H1 (cell line): ENCODE measurements at regions of chr2 and their contacts with region 1.

Region 1: GRCh38 chr2:138373993-138374408 is 127.6 kb upstream of the SPOPL start:
- DNase-seq: no peak
- H3K4me3 ChIP-seq: no peak overlapping the region
- H3K27ac ChIP-seq: no peak overlapping the region
- H3K4me1 ChIP-seq: no peaks in the 10 kb centered on the region
- H3K27me3 ChIP-seq: no peaks in the 10 kb centered on the region
- CTCF ChIP-seq: peak in 2 of 3 experiments; percentile 52 to 68; a peak in 3 of 4 replicates
- EP300 ChIP-seq: no peak
- POLR2A ChIP-seq: no peak
- RAD21 ChIP-seq: peak; percentile 78 to 80

Region 2: GRCh38 chr2:138390316-138390945 is 16.4 kb after region 1 on chr2:
- CTCF ChIA-PET with region 1: interaction called, 23 read pairs
- POLR2A ChIA-PET with region 1: no interaction called
- DNase-seq: no peak
- H3K4me3 ChIP-seq: no peak overlapping the region
- H3K27ac ChIP-seq: no peak overlapping the region
- H3K4me1 ChIP-seq: no peaks in the 10 kb centered on the region
- H3K27me3 ChIP-seq: no peaks in the 10 kb centered on the region
- CTCF ChIP-seq: no peak
- EP300 ChIP-seq: no peak
- POLR2A ChIP-seq: no peak
- RAD21 ChIP-seq: no peak